ENCODE measurements at regions of chr15 and their contacts with region 1.

Region 1: DNA sequence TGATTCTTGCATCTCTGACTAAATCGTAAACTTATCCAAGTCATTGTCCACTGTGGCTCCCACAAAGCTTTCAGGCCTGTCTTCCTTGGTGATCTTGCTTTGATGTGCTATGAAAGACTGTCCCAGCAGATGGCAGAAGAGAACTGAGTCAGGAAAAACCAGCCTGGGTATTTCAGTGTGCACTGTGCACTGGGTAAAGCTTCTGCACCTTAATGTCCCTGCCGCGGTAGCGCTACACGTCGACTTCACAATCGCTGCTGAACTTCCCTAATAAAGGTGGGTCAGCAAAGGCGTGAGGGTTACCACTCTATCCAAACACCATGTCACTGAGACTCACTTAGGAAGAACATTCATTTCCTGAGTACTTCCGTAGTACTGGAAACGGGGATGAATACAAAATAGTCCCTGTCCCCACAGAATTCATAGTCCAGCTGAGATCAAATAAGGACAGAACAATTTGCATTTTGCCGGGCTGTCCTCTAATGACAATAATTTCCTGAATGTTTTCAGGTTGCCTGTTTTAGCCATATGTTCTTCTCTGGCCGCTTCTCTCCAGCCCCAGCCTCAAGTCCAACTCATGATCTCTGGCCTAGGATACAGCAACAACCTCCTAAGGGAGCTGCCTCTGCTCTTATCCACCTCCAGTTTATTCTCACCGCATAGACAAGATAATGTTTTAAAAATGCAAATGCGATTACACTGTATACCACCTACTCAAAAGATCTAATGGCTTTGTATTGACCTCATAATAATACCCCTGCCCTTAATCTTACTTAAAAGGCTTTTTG is 83.6 kb upstream of the AKAP13 start:
- DNase-seq: peak; percentile 80
- H3K4me3 Mint-ChIP-seq: peak overlapping the region; percentile 54
- H3K27ac Mint-ChIP-seq: no peak overlapping the region
- H3K4me1 Mint-ChIP-seq: peaks cover 20% of the 10 kb centered on the region
- H3K27me3 Mint-ChIP-seq: no peaks in the 10 kb centered on the region
- CTCF ChIP-seq: peak; percentile 68

Region 2: DNA sequence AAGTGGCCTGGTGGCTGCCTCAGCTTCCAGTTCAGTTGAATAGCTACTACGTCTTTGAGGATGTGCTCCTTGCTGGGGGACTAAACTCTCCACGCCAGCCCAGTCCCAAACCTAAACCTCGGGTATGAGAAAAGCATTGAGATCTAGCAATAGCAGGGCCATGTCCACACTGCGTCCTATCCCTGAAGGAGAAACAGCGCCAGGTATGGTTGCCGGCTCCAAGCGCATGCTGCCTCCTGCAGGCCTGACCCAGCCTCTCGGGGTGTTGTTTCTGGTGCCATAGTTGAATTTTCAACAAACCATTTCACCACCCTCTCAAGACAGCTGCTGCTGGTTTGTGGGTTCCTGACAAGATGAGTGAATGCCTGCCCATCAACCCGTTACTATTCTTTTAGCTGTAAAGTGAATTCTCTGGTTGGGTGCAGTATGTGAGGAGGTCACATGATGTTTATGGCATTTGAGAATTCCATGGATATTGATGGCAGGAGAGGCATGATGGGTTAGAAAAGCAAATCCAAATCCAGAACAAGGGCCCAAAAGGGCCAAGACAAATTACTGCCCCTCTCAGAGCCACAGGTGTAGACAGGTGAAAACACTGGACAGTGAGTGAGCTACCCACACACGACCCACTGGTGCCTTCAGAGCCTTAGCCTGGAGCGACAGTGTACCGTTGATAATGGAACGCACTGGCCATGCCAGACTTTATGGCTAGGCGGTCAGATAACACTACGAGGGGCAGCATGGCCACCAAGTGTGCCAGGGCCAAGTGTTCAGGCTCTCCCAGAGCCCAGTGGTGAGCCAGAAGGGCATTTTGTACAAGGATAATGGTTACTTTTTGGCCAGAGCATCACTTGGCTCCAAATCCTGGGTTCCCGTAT is 425.1 kb before region 1 on chr15:
- CTCF ChIA-PET with region 1: no interaction called
- intact Hi-C with region 1: no loop called
- DNase-seq: no peak
- H3K4me3 Mint-ChIP-seq: no peak overlapping the region
- H3K27ac Mint-ChIP-seq: no peak overlapping the region
- H3K4me1 Mint-ChIP-seq: peaks cover under 1% of the 10 kb centered on the region
- H3K27me3 Mint-ChIP-seq: no peaks in the 10 kb centered on the region
- CTCF ChIP-seq: no peak

Region 3: DNA sequence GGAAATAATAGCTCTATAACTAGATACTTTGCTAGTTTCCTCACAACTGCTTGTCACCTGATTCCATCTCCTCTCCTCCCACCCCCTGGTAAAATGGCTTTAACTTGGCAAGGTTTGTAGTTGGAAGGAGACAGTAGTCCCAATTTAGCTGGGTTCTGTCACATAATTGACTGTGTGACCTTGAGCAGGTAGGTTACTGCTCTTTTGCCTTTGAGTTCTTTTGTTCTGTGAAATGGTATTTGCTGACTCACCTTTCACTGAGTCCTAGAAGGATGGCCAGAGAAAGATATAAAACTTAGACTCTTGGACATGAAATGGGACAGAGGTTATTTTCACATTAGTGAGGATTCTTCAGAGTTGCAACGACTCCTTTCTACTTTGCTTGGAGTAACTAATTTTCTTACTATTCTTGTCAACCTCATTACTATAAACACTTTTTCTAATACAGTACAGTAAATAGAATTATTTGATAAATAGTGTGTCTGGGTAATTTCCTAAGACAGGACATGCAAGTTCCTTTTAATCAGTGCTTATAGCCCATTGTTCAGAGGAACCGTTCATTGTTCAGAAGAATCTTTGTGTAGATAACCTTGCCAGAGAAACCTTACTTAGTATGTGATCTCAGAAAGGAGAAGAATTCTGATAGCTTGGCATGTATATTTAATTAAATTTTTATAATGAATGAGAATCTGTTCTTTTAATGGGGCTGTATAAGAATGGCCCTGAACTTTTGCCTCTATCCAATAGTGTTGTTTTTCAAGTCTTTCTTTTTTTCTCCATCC is 97.9 kb after region 1 on chr15:
- CTCF ChIA-PET with region 1: no interaction called
- intact Hi-C with region 1: no loop called
- DNase-seq: no peak
- H3K4me3 Mint-ChIP-seq: no peak overlapping the region
- H3K27ac Mint-ChIP-seq: no peak overlapping the region
- H3K4me1 Mint-ChIP-seq: peaks cover 30% of the 10 kb centered on the region
- H3K27me3 Mint-ChIP-seq: no peaks in the 10 kb centered on the region
- CTCF ChIP-seq: no peak

Region 4: DNA sequence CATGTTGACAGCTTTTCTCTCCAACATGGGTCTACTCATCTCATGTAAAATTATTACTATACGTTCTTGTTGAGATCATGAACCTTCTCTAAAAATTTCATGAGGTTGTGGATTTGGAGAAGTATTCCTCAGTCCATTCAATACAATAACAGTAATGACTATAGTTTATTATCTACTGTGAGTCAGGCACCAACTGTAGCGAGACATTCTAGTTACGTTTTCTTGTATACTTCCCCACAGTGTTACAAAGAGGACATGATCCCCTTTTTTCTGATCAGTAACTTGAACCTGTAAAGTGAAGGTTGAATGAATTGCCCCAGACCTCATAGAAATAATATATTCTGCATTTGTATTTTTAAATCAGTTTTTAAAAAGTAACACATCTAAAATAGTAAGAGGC is 160.0 kb after region 1 on chr15:
- CTCF ChIA-PET with region 1: interaction called, 11 read pairs
- intact Hi-C with region 1: no loop called
- DNase-seq: no peak
- H3K4me3 Mint-ChIP-seq: no peak overlapping the region
- H3K27ac Mint-ChIP-seq: no peak overlapping the region
- H3K4me1 Mint-ChIP-seq: peaks cover 55% of the 10 kb centered on the region
- H3K27me3 Mint-ChIP-seq: no peaks in the 10 kb centered on the region
- CTCF ChIP-seq: no peak

Region 5: GRCh38 chr15:85504749-85505676 is 208.2 kb after region 1 on chr15:
- CTCF ChIA-PET with region 1: interaction called, 5 read pairs
- intact Hi-C with region 1: loop called (anchors 5 kb)
- DNase-seq: peak; percentile 63
- H3K4me3 Mint-ChIP-seq: no peak overlapping the region
- H3K27ac Mint-ChIP-seq: peak overlapping the region; percentile 26
- H3K4me1 Mint-ChIP-seq: peaks cover 32% of the 10 kb centered on the region
- H3K27me3 Mint-ChIP-seq: no peaks in the 10 kb centered on the region
- CTCF ChIP-seq: no peak

Region 6: DNA sequence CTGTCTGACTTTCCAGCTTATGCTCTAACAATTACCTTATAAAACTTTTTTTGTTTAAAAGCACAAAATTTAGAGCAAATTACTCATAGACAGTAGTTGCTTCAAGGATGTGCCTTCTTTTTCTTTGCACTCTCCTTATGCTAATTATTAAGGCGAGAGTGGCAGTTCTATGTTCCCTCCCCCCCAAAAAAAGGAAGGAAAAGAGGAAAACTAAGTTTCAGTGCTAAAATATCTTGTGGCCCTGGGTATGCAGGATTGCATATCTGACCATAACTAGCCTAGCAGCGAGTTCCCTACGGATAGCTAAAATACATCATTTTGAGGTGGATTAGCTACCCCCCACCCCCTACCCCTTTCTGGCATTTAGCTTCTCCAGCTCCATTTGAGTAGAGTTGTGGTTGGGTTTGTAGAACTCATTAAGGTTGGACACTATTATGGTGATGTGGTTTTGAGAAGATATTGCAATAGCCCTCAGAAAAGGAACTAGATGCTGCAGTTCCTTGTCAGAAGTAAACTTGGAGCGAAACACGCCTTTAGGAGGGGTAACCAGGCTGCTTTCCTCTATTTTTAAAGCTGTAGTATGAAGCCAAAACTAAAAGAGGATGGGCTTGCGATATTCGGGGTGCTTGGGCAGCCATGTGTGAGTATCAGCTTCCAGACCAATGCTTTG is 258.2 kb after region 1 on chr15:
- CTCF ChIA-PET with region 1: no interaction called
- intact Hi-C with region 1: no loop called
- DNase-seq: no peak
- H3K4me3 Mint-ChIP-seq: no peak overlapping the region
- H3K27ac Mint-ChIP-seq: no peak overlapping the region
- H3K4me1 Mint-ChIP-seq: peaks cover 8% of the 10 kb centered on the region
- H3K27me3 Mint-ChIP-seq: no peaks in the 10 kb centered on the region
- CTCF ChIP-seq: no peak

Region 7: DNA sequence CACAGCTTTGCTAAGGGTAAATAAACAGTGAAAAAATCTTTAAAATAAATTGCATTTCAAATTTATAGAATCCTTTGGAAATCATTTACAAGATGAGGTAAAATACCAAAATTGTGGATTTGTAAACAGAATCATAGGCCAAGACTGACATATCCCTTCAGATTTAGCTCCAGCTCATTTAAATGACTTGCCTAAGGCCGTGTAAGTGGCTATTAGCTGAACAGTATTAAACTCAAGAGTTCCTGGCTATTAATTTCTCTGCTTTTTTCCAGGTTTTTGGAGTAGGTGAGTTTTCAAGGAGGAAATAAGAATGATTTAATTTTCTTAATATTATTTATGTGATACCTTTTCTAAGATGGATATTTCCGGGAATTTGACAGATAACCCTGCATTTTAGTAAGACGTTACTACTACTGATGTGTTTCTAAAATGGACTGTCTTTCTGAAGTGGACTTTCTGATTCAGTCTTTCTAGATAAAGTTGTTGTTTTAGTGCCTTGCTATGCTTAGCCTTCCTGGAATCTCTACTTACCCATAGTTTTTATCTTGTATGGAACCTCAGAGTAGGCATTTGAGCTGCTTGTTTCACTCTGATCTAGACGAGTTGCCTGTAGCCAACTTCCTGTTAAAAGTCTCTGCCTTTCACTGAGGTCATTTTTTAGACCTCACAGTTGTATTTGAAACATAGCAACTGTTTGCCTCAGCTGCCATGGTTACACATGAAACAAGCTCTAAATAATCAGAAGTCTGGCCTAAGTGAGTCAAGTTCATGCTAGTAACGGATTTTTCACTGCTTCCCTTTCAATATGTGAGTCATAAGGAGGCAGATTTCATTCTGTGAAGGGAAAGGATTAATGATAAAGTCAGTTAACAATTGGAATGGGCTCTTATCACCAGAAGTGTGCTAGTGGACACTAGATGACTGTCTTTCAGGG is 370.9 kb after region 1 on chr15:
- CTCF ChIA-PET with region 1: interaction called, 5 read pairs
- intact Hi-C with region 1: loop called (anchors 10 kb)
- DNase-seq: peak; percentile 73
- H3K4me3 Mint-ChIP-seq: peak overlapping the region; percentile 15
- H3K27ac Mint-ChIP-seq: peak overlapping the region; percentile 93
- H3K4me1 Mint-ChIP-seq: peaks cover 24% of the 10 kb centered on the region
- H3K27me3 Mint-ChIP-seq: no peaks in the 10 kb centered on the region
- CTCF ChIP-seq: no peak

Region 8: DNA sequence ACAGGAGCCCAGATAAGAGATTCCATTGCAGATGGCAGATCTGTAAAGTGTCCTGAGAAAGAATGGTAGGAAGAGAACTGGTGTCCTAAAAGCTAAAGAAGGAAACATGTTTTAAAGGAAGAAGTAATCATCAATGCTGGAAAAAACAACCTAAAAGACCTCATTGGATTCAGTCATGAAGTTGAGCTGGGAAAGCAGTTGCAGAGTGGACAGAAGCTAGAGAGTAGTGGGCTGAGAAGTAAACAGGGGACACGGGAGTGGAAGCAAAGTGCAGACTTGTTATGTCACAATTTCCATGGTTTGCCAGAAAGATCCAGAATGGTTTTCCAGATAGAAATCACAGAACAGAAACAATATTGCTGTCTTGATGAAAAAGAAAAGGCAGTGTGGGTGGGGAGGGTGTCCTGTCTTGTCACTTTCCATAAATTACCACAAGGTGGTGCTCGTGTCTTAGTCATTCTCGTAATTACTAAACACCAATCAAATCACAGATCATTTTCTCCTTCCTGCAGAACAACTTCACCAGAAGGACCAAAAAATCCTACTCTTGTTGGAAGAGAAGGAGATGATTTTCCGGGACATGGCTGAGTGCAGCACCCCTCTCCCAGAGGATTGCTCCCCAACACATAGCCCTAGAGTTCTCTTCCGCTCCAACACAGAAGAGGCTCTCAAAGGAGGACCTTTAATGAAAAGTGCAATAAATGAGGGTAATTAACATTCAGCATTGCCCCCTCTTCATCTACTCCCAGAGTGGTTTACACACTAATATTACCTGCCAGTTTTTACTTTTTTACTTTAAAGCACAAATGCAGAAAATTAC is 433.4 kb after region 1 on chr15:
- CTCF ChIA-PET with region 1: no interaction called
- intact Hi-C with region 1: loop called (anchors 10 kb)
- DNase-seq: peak; percentile 64
- H3K4me3 Mint-ChIP-seq: no peak overlapping the region
- H3K27ac Mint-ChIP-seq: no peak overlapping the region
- H3K4me1 Mint-ChIP-seq: no peaks in the 10 kb centered on the region
- H3K27me3 Mint-ChIP-seq: no peaks in the 10 kb centered on the region
- CTCF ChIP-seq: peak; percentile 70

Measured in Calu3 (cell line).